ENCODE measurements at regions of chr3 and their contacts with region 1.

Region 1: DNA sequence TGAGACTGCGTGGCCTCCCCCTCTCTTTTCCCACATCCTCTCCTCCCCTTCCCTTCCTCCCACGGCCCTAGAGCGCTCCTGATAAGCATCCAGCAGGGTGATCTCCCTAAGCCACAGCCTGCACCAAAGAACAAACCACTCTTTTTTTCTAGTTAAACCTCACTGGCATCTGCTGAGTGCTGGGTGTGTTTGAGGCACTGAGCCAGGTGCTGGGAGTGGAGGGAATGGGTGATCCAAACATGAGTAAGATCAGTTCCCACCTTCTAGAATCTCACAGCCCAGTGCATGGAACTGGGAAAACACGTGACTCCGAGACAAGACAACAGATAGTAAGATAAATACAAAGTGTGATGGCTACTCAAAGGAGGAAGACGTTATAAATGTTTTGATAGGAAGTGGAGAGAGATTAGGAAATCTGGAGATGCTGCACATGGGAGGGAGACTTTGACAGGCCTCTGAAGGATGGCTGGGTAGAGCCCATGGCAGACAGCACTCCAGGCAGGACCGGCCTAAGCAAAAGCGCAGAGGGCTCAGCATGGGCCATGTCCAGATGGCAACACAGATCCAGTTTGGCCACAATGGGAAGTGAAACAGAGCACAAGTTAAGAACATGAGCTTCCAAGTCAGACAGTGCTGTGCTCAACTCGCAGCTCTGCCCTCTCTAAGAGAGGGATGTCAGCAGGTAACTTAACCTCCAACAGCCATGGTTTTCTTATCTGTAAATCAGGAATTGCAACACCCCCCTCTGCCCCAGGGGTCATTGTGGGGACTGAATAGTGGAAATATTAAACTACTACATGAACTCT is 55.6 kb downstream of the CCR3 start:
- DNase-seq: no peak
- H3K4me3 Mint-ChIP-seq: no peak overlapping the region
- H3K27ac Mint-ChIP-seq: peak overlapping the region; percentile 93
- H3K4me1 Mint-ChIP-seq: peaks cover 93% of the 10 kb centered on the region
- H3K27me3 Mint-ChIP-seq: peaks cover 3% of the 10 kb centered on the region

Region 2: GRCh38 chr3:46276502-46277099 is 21.3 kb before region 1 on chr3:
- CTCF ChIA-PET with region 1: interaction called, 11 read pairs
- POLR2A ChIA-PET with region 1: interaction called, 18 read pairs
- DNase-seq: peak; percentile 85
- H3K4me3 Mint-ChIP-seq: no peak overlapping the region
- H3K27ac Mint-ChIP-seq: peak overlapping the region; percentile 41
- H3K4me1 Mint-ChIP-seq: peaks cover 57% of the 10 kb centered on the region
- H3K27me3 Mint-ChIP-seq: peaks cover 36% of the 10 kb centered on the region

Region 3: DNA sequence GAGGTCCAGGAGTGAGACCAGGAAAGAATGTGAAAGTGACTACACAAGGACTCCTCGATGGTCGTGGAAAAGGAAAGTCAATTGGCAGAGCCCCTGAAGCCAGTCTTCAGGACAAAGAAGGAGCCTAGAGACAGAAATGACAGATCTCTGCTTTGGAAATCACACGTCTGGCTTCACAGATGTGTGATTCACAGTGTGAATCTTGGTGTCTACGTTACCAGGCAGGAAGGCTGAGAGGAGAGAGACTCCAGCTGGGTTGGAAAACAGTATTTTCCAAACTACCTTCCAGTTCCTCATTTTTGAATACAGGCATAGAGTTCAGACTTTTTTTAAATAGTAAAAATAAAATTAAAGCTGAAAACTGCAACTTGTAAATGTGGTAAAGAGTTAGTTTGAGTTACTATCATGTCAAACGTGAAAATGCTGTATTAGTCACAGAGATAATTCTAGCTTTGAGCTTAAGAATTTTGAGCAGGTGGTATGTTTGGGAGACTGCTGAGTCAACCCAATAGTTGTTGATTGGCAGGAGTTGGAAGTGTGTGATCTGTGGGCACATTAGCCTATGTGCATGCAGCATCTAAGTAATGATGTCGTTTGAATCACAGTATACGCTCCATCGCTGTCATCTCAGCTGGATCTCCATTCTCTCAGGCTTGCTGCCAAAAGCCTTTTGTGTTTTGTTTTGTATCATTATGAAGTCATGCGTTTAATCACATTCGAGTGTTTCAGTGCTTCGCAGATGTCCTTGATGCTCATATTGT is 62.1 kb after region 1 on chr3:
- CTCF ChIA-PET with region 1: interaction called, 6 read pairs
- POLR2A ChIA-PET with region 1: interaction called, 207 read pairs
- DNase-seq: no peak
- H3K4me3 Mint-ChIP-seq: peak overlapping the region; percentile 31
- H3K27ac Mint-ChIP-seq: peak overlapping the region; percentile 62
- H3K4me1 Mint-ChIP-seq: peaks cover 78% of the 10 kb centered on the region
- H3K27me3 Mint-ChIP-seq: peaks cover 31% of the 10 kb centered on the region

Region 4: GRCh38 chr3:46496741-46497554 is 199.1 kb after region 1 on chr3:
- CTCF ChIA-PET with region 1: no interaction called
- POLR2A ChIA-PET with region 1: no interaction called
- DNase-seq: peak; percentile 66
- H3K4me3 Mint-ChIP-seq: no peak overlapping the region
- H3K27ac Mint-ChIP-seq: no peak overlapping the region
- H3K4me1 Mint-ChIP-seq: peaks cover 3% of the 10 kb centered on the region
- H3K27me3 Mint-ChIP-seq: peaks cover 3% of the 10 kb centered on the region